Ovary (tissue), 10 donors: ENCODE measurements at regions of chr2 and their contacts with region 1.

Region 1: GRCh38 chr2:202588647-202589581 is 45.9 kb upstream of the FAM117B start:
- DNase-seq: peak; percentile 58 to 76 (median 71)
- H3K4me3 ChIP-seq: peak overlapping the region; percentile 18
- H3K27ac ChIP-seq: no peak overlapping the region
- H3K4me1 ChIP-seq: peaks cover 2% of the 10 kb centered on the region
- H3K27me3 ChIP-seq: no peaks in the 10 kb centered on the region
- CTCF ChIP-seq: peak; percentile 64 to 89 (median 87)
- EP300 ChIP-seq: no peak
- POLR2A ChIP-seq: no peak

Region 2: DNA sequence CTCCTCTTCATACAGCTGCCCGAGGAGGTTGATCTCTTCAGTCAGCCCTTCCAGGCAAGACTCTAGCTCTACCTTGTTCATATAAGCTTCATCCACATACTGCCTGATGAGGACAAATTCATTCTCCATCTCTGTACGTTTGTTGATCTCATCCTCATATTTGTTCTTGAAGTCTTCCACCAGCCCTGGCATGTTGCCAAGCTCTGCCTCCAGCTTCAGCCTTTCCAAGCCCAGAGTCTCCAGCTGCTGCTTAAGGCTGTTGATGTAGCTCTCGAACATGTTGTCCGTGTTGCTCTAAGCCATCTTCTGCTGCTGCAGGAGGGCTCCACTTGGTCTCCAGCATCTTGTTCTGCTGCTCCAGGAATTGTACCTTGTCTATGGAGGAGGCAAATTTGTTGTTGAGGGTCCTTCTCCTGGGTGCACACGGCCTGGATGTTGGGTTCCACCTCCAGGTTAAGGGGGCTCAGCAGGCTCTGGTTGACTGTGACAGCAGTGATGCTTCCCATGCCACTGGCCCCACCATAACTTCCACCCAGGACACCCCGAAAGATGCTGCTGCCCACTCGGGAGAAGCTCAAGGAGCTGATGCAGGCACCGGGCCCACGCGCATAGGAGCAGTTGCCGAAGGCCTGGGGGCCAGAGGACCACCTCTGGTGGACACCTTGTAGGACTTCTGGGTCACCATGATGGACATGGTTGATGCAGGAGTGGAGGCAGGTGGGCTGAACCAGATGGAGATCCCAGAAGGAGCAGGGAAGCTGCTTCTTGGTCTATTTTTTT is 252.4 kb after region 1 on chr2:
- intact Hi-C with region 1: no loop called
- DNase-seq: no peak
- H3K4me3 ChIP-seq: no peak overlapping the region
- H3K27ac ChIP-seq: no peak overlapping the region
- H3K4me1 ChIP-seq: no peaks in the 10 kb centered on the region
- H3K27me3 ChIP-seq: no peaks in the 10 kb centered on the region
- CTCF ChIP-seq: no peak
- EP300 ChIP-seq: no peak
- POLR2A ChIP-seq: no peak

Region 3: DNA sequence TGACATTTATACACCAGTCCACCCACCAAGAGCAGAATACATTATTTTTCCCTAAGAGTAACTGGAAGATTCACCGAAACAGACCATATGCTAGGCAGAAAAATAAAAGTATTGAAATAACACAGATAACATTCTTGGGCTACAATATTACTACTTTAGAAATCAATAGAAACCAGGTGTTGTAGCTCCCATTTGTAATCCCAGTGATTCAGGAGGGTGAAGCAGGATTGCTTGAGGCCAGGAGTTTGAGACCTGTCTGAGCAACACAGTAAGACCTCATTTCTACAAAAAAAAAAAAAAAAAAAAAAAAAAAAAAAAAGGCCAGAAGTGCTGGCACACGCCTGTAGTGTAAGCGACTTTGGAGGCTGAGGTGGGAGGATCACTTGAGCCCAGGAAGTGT is 273.1 kb after region 1 on chr2:
- intact Hi-C with region 1: loop called in 1 of 4 experiments (anchors 10 kb)
- DNase-seq: no peak
- H3K4me3 ChIP-seq: no peak overlapping the region
- H3K27ac ChIP-seq: no peak overlapping the region
- H3K4me1 ChIP-seq: no peaks in the 10 kb centered on the region
- H3K27me3 ChIP-seq: no peaks in the 10 kb centered on the region
- CTCF ChIP-seq: no peak
- EP300 ChIP-seq: no peak
- POLR2A ChIP-seq: no peak

Region 4: GRCh38 chr2:202870431-202871299 is 281.8 kb after region 1 on chr2:
- intact Hi-C with region 1: loop called in 3 of 4 experiments (anchors 10 kb)
- DNase-seq: peak; percentile 66 to 81 (median 77)
- H3K4me3 ChIP-seq: peak overlapping the region; percentile 49
- H3K27ac ChIP-seq: peak overlapping the region; percentile 84 to 91
- H3K4me1 ChIP-seq: no peaks in the 10 kb centered on the region
- H3K27me3 ChIP-seq: no peaks in the 10 kb centered on the region
- CTCF ChIP-seq: peak in 1 of 3 donors; percentile 7
- EP300 ChIP-seq: no peak
- POLR2A ChIP-seq: no peak